Activated CD8-positive, alpha-beta T cell treated with anti-CD3 and anti-CD28 coated beads for 36 hours (primary cell): ENCODE measurements at regions of chr3 and their contacts with region 1.

Region 1: GRCh38 chr3:52407779-52408178 is 37.1 kb downstream of the SEMA3G start:
- DNase-seq: no peak
- ATAC-seq: no peak
- H3K4me3 Mint-ChIP-seq: peak overlapping the region; percentile 95
- H3K27ac Mint-ChIP-seq: peak overlapping the region; percentile 76
- H3K4me1 Mint-ChIP-seq: peaks cover 38% of the 10 kb centered on the region
- H3K27me3 Mint-ChIP-seq: no peaks in the 10 kb centered on the region
- CTCF ChIP-seq: no peak

Region 2: DNA sequence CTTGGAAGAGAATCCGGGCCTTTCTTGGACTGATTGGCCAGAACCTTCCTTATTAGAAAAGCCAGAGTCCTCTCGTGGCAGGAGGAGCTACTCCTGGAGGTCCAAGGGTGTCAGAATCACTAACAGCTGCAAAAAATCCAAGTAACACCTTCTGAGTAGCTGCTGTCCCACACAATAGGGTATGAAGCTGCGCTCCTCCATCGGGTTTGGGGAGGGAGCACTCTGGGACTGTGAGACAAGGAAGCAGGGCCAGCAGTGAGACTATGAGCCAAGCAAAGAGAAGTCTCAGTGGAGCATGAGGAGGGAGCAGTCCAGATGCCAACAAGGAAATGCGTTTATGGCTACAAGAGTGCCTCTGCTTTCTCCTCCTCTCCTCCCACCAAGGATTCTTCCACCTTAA is 15.4 kb after region 1 on chr3:
- CTCF ChIA-PET with region 1: interaction called, 16 read pairs
- POLR2A ChIA-PET with region 1: interaction called, 4 read pairs
- intact Hi-C with region 1: no loop called
- DNase-seq: no peak
- ATAC-seq: no peak
- H3K4me3 Mint-ChIP-seq: no peak overlapping the region
- H3K27ac Mint-ChIP-seq: no peak overlapping the region
- H3K4me1 Mint-ChIP-seq: no peaks in the 10 kb centered on the region
- H3K27me3 Mint-ChIP-seq: no peaks in the 10 kb centered on the region
- CTCF ChIP-seq: no peak

Region 3: DNA sequence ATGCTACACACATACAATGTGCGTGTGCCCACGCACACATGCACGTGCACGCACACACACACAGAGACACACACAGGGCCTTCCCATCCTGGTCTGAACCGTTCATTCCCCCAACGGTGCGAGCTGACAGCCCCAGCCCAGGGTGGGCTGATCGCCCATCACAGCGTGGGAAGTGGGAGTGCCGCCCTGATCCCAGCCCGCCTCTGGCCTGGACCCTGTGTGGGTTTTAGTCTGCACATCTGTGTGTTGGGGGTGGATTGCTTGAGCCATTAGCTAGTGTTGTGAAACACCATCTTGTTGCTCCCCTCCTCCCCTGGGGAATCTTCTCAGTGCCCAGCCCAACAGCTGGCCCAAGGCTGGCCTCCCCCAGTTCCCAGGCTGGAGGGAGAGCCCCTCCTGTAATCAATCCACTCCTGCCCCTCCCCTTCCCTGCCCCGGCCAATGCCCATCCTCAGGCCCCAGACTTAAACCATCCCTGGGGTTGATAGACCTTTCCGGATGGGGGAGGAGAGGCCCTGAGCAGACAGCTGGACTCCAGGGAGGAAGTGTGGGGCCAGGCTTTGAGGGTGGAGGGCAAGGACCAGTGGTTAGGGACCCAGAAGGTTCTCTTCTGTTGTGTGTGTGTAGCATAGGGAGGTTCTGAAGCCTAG is 28.8 kb after region 1 on chr3:
- CTCF ChIA-PET with region 1: interaction called, 12 read pairs
- POLR2A ChIA-PET with region 1: interaction called, 3 read pairs
- intact Hi-C with region 1: no loop called
- DNase-seq: no peak
- ATAC-seq: no peak
- H3K4me3 Mint-ChIP-seq: no peak overlapping the region
- H3K27ac Mint-ChIP-seq: no peak overlapping the region
- H3K4me1 Mint-ChIP-seq: no peaks in the 10 kb centered on the region
- H3K27me3 Mint-ChIP-seq: no peaks in the 10 kb centered on the region
- CTCF ChIP-seq: no peak

Region 4: GRCh38 chr3:52455283-52456168 is 47.7 kb after region 1 on chr3 and contains the start of gene NISCH:
- CTCF ChIA-PET with region 1: interaction called, 24 read pairs
- POLR2A ChIA-PET with region 1: interaction called, 3 read pairs
- intact Hi-C with region 1: no loop called
- DNase-seq: peak; percentile 95
- ATAC-seq: peak; percentile 91
- H3K4me3 Mint-ChIP-seq: peak within 1 kb of the TSS; percentile 83
- H3K27ac Mint-ChIP-seq: peak within 1 kb of the TSS; percentile 94
- H3K4me1 Mint-ChIP-seq: peaks cover 39% of the 10 kb centered on the region
- H3K27me3 Mint-ChIP-seq: no peaks in the 10 kb centered on the region
- CTCF ChIP-seq: no peak
- total RNA-seq, gene NISCH: 57.1 to 57.4 TPM

Region 5: GRCh38 chr3:52509753-52510328 is 102.1 kb after region 1 on chr3:
- CTCF ChIA-PET with region 1: no interaction called
- POLR2A ChIA-PET with region 1: no interaction called
- intact Hi-C with region 1: no loop called
- DNase-seq: no peak
- ATAC-seq: no peak
- H3K4me3 Mint-ChIP-seq: no peak overlapping the region
- H3K27ac Mint-ChIP-seq: no peak overlapping the region
- H3K4me1 Mint-ChIP-seq: no peaks in the 10 kb centered on the region
- H3K27me3 Mint-ChIP-seq: no peaks in the 10 kb centered on the region
- CTCF ChIP-seq: no peak